ENCODE measurements at regions of chr17 and their contacts with region 1.

Region 1: DNA sequence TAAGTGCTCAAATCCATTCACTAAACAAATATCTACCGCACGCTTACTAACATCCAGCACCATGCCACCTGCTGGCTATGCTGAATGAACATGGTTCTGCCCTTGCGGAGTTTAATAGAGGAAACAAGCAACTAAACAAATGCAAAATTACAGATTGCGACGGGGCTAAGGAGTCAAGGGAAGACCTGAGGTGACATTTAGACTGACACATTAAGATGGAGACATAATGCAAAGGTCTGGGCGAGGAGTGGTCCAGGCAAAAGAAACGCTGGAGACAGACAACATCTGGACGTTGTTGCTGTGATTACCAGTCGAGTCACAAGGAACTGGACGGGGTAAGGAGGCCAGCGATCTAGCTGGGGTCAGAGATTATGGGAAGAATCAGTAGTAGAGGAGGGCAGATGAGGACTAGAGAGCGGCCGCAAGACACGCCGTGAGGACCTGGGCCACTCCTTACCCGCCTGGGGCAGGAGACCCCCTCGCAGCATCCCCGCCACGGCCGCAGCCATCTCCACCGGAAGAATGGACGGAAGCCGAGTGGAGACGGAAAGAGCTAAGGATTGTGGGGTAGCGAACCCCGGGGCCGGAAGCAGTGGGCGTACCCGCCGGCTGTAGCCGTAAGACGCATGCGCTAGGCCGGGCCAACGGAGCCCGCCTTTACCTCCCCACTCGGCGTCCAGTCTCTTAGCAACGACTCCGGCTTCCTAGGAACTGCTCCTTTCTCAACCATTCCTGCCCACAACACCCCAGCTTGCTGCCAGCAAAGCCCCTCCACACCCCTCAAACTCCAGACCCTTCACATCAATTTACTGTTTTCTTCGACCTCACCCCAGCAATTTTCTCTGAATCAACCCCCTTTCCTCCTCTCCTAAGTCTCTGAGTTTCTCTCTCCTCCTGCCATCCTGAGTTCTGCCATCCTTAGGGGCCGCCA is at the starts of genes LRRC46 and MRPL10:
- H3K4me3 ChIP-seq: peak within 1 kb of the TSS; percentile 92
- H3K27ac ChIP-seq: peak within 1 kb of the TSS; percentile 21
- H3K4me1 ChIP-seq: peaks cover 7% of the 10 kb centered on the region; the same call in 1 of the 2 replicates
- CTCF ChIP-seq: peak; percentile 46; the same call in 1 of the 2 replicates

Region 2: GRCh38 chr17:47776330-47777197 is 54.7 kb before region 1 on chr17:
- CTCF ChIA-PET with region 1: no interaction called
- POLR2A ChIA-PET with region 1: no interaction called
- H3K4me3 ChIP-seq: no peak overlapping the region
- H3K27ac ChIP-seq: no peak overlapping the region
- H3K4me1 ChIP-seq: no peaks in the 10 kb centered on the region
- CTCF ChIP-seq: peak; percentile 43; the same call in 1 of the 2 replicates

Region 3: DNA sequence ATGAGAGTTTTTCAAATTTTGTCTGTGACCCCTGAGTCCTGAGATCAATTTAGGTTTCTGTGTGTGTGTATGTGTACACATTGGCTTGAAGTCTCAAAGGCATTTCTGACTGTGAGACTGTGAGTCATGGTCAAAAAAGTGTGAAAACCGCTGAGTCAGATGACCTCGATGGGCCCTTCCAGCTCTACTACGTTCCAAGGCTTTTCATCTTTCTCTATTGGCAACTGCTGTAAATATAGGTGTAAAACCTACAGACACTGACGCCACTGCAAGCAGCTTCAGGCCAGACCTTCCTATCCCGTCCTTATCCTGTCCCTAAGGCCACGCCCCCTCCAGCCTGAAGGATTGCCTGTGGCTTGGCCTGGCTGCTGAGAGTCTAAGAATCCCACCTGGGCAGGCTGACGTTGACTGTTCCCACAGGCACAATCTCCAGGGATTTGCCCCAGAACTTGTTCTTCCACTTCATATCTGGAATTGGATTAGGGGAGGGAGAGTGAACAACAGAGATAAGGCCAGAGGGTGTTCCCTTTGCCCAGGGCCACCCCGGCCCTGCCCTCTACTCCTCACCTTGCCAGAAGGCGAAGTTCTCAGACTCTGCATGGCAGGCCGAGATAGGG is 21.0 kb before region 1 on chr17:
- CTCF ChIA-PET with region 1: no interaction called
- POLR2A ChIA-PET with region 1: interaction called, 15 read pairs
- H3K4me3 ChIP-seq: no peak overlapping the region
- H3K27ac ChIP-seq: no peak overlapping the region
- H3K4me1 ChIP-seq: no peaks in the 10 kb centered on the region
- CTCF ChIP-seq: no peak

Region 4: DNA sequence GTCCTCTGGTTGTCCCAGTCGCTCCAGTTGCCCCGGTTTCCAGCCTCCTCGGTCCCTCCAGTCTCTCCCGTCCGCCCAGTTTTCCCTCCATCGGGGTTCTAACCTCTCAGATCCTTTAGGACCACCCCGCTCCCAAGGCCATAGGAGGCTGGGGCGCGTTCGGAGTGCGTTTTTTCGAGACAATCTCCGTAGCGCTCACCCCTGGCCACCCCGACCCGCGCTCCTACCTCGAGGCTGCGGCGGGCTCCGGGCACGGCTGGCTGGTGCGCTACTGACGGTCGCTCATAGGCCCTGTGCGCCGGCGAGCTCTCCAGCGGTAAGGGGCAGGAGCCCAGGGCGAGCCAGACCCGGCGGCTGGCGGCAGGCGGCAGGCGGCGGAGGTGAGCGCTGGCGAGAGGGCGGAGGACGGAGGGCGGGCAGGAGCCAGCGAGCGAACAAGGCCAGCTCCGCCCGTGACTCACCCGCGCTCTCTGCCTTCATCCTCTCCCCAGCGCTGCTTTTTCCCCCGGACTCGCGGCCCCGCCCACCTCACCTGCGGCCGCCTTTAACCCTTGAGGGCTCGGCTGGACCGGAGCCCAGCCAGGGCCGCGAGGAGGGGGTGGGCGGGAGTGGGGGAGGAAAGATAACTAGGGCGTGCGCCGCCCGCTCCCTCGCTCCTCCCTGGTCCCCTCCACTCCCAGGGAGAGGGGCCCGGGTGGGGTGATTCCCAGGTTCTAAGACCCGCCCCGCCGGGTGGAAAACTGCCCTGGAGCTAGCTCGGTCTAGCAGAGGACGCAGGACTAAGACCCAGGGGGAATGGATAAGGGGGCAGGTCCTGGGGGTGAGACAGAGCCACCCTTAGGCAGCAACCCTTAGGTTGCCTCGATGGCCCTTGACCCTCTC is 19.7 kb after region 1 on chr17 and contains the start of gene SP6:
- CTCF ChIA-PET with region 1: no interaction called
- POLR2A ChIA-PET with region 1: interaction called, 14 read pairs
- H3K4me3 ChIP-seq: peak within 1 kb of the TSS; percentile 46
- H3K27ac ChIP-seq: peak within 1 kb of the TSS; percentile 38; the same call in 1 of the 2 replicates
- H3K4me1 ChIP-seq: peaks cover 4% of the 10 kb centered on the region; the same call in 1 of the 2 replicates
- CTCF ChIP-seq: peak; percentile 70

Region 5: GRCh38 chr17:47915776-47916398 is 84.6 kb after region 1 on chr17:
- CTCF ChIA-PET with region 1: no interaction called
- POLR2A ChIA-PET with region 1: no interaction called
- H3K4me3 ChIP-seq: no peak overlapping the region
- H3K27ac ChIP-seq: no peak overlapping the region
- H3K4me1 ChIP-seq: no peaks in the 10 kb centered on the region
- CTCF ChIP-seq: no peak

Measured in HEK293 (cell line).